Esophagus squamous epithelium (tissue), 5 donors: ENCODE measurements at regions of chr16 and their contacts with region 1.

Region 1: GRCh38 chr16:88442727-88443576 is 10.1 kb upstream of the ZFPM1 start:
- DNase-seq: no peak
- H3K4me3 ChIP-seq: no peak overlapping the region
- H3K27ac ChIP-seq: no peak overlapping the region
- H3K4me1 ChIP-seq: peaks cover 0 to 10% (median 3%) of the 10 kb centered on the region in 3 donors
- H3K27me3 ChIP-seq: peaks cover 0 to 41% (median 0%) of the 10 kb centered on the region in 4 donors
- CTCF ChIP-seq: peak; percentile 95 to 97 (median 97)
- POLR2A ChIP-seq: no peak

Region 2: DNA sequence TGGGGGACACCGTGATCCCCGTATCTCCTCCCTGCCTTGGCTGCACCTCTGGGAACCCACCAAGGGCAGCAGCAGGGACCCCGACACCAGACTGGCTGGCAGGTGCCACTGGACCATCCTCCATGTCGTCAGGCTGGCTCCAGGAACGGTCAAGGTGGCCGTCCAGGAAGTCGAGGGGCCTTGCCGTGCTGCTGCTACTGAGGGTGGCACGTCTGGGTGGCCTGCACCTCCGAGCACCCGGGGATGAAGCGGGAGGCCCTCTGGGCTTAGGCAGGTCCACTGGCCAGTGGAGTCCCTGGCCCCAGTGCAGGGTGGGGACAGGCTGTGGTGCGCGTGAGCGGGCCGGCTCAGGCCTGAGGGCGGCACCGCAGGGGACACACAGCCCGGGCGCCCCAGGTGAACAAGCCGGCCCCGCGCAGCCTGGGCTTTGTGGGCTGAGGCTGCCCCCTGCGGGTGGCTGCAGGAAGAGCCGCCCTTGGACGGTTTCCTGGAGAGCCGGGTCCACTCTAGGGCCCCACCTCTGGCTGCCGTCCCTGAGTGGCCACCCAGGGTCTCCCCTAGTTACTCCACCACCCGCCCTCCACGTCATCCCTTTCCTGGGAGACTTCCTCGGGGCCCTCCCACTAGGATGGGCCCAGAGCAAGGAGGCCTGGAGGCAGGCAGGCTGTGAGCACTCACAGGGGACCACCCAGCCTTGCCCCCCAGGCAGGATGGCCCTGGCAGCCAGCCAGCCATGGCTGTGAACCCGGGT is 84.4 kb after region 1 on chr16:
- intact Hi-C with region 1: loop called (anchors 5 kb)
- DNase-seq: no peak
- H3K4me3 ChIP-seq: no peak overlapping the region
- H3K27ac ChIP-seq: peak overlapping the region in 1 of 4 donors; percentile 21
- H3K4me1 ChIP-seq: peaks cover 9 to 55% (median 20%) of the 10 kb centered on the region in 3 donors
- H3K27me3 ChIP-seq: peaks cover 0 to 46% (median 2%) of the 10 kb centered on the region in 4 donors
- CTCF ChIP-seq: peak; percentile 75 to 91 (median 84)
- POLR2A ChIP-seq: no peak

Region 3: DNA sequence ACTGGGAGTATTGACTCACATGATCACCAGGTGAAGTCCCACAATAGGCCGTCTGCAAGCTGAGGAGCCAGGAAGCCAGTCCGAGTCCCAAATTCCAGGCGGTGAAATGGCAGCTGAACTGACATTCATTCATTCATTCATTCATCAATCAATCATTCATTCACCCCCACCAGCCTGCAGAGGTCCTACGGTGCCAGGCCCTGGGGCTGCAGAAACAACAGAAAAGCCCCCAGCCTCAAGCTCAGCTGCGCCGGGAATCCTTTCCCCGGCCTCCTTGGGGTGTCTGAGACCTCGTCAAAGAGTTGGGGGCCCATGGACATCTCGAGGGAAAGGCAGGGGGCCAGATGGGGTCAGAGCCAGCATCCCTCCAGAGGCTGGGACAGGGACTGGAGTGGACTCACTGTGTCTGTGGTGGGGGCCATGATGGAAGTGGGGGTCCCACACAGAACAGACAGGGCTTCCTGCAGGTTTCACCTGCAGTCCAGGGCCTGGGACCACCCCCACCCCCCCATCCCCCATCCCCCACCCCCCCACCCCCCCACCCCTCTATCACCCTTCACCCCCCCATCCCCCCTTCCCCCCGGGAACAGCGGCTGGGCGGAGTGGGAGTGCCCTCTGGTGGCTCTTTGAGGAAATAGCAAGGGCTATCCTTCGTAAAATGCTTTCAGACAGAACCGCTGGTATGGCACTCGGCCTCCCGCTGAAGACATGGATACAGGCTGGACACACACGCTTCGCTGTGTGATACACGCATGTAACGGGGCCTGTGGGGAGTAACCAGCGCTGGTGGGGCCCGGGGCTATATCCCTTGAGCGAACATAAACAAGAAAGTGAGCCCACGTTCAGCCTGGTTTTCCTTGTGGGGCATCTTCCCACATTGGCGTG is 118.8 kb after region 1 on chr16:
- intact Hi-C with region 1: loop called (anchors 5 kb)
- DNase-seq: no peak
- H3K4me3 ChIP-seq: peak overlapping the region in 2 of 4 donors; percentile 23 to 49
- H3K27ac ChIP-seq: no peak overlapping the region
- H3K4me1 ChIP-seq: peaks cover 0 to 15% (median 5%) of the 10 kb centered on the region in 3 donors
- H3K27me3 ChIP-seq: peaks cover 0 to 32% (median 0%) of the 10 kb centered on the region in 4 donors
- CTCF ChIP-seq: peak; percentile 46 to 71 (median 54)
- POLR2A ChIP-seq: no peak